PC-3 (cell line): ENCODE measurements at regions of chr6 and their contacts with region 1.

Region 1: GRCh38 chr6:166026586-166027126 is 141.0 kb downstream of the TBXT start:
- DNase-seq: no peak
- ATAC-seq: no peak
- H3K4me3 ChIP-seq: no peak overlapping the region
- H3K27ac ChIP-seq: no peak overlapping the region
- H3K4me1 ChIP-seq: no peaks in the 10 kb centered on the region
- H3K27me3 ChIP-seq: no peaks in the 10 kb centered on the region
- CTCF ChIP-seq: no peak

Region 2: GRCh38 chr6:165274611-165275010 is 752.0 kb before region 1 on chr6:
- CTCF ChIA-PET with region 1: no interaction called
- POLR2A ChIA-PET with region 1: interaction called, 14 read pairs
- intact Hi-C with region 1: no loop called
- DNase-seq: no peak
- ATAC-seq: no peak
- H3K4me3 ChIP-seq: no peak overlapping the region
- H3K27ac ChIP-seq: no peak overlapping the region
- H3K4me1 ChIP-seq: no peaks in the 10 kb centered on the region
- H3K27me3 ChIP-seq: peaks cover 4% of the 10 kb centered on the region; the same call in 1 of the 2 replicates
- CTCF ChIP-seq: no peak

Region 3: GRCh38 chr6:165664559-165665383 is 361.9 kb before region 1 on chr6:
- CTCF ChIA-PET with region 1: no interaction called
- POLR2A ChIA-PET with region 1: no interaction called
- intact Hi-C with region 1: no loop called
- DNase-seq: no peak
- ATAC-seq: no peak
- H3K4me3 ChIP-seq: no peak overlapping the region
- H3K27ac ChIP-seq: no peak overlapping the region
- H3K4me1 ChIP-seq: peaks cover 4% of the 10 kb centered on the region; the same call in 1 of the 2 replicates
- H3K27me3 ChIP-seq: peaks cover 58% of the 10 kb centered on the region
- CTCF ChIP-seq: no peak